OCI-LY7 (cell line): ENCODE measurements at regions of chr5 and their contacts with region 1.

Region 1: GRCh38 chr5:141691867-141692532 is 10.0 kb upstream of the ARAP3 start:
- DNase-seq: peak; percentile 81
- H3K4me3 ChIP-seq: peak overlapping the region; percentile 52
- H3K27ac ChIP-seq: no peak overlapping the region
- H3K4me1 ChIP-seq: peaks cover 16% of the 10 kb centered on the region
- CTCF ChIP-seq: peak; percentile 91

Region 2: GRCh38 chr5:141590127-141590526 is 101.9 kb before region 1 on chr5:
- CTCF ChIA-PET with region 1: no interaction called
- POLR2A ChIA-PET with region 1: no interaction called
- intact Hi-C with region 1: loop called (anchors 5 kb)
- DNase-seq: no peak
- H3K4me3 ChIP-seq: no peak overlapping the region
- H3K27ac ChIP-seq: no peak overlapping the region
- H3K4me1 ChIP-seq: peaks cover 22% of the 10 kb centered on the region
- CTCF ChIP-seq: no peak

Region 3: DNA sequence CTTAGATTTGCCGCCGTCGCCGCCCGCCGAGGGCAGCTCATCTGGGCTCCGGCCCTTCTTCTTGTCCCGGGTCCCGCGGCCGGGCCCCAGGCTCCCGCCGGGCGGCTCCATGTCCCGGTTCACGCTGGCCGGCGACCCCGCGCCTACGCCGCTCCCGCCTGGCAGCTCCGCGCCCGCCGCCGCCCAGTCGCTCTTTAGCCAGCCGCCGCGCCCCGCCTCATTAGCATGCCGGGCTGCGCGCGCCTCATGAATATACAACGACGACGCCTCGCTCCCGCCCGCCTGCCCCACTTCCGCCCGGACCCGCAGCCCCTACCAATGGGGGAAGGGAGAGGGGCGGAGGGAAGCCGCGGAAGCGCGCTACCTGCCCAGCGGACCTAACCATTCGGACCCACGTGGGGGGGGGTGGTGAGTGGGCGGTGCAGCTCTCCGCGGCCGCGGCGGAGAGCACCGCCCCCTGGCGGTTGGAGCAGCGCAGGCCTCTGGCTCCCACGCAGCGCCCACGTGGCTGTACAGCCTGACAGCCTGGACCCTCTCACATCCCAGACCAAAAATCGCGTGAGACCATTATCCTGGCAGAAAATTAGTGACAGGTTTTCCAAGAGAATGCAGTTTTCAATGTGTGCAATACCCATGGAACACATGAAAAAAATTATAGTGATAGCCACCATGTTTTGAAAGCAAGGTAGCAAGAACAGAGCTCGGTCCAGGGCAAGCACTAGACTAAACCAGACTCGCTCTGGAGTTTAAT is 73.0 kb before region 1 on chr5 and contains the start of gene DIAPH1:
- CTCF ChIA-PET with region 1: no interaction called
- POLR2A ChIA-PET with region 1: no interaction called
- intact Hi-C with region 1: no loop called
- DNase-seq: peak; percentile 98
- H3K4me3 ChIP-seq: peak within 1 kb of the TSS; percentile 98
- H3K27ac ChIP-seq: peak within 1 kb of the TSS; percentile 63
- H3K4me1 ChIP-seq: peaks cover 54% of the 10 kb centered on the region
- CTCF ChIP-seq: peak; percentile 97
- total RNA-seq, gene DIAPH1: 64.9 and 78.8 TPM in 2 replicates

Region 4: DNA sequence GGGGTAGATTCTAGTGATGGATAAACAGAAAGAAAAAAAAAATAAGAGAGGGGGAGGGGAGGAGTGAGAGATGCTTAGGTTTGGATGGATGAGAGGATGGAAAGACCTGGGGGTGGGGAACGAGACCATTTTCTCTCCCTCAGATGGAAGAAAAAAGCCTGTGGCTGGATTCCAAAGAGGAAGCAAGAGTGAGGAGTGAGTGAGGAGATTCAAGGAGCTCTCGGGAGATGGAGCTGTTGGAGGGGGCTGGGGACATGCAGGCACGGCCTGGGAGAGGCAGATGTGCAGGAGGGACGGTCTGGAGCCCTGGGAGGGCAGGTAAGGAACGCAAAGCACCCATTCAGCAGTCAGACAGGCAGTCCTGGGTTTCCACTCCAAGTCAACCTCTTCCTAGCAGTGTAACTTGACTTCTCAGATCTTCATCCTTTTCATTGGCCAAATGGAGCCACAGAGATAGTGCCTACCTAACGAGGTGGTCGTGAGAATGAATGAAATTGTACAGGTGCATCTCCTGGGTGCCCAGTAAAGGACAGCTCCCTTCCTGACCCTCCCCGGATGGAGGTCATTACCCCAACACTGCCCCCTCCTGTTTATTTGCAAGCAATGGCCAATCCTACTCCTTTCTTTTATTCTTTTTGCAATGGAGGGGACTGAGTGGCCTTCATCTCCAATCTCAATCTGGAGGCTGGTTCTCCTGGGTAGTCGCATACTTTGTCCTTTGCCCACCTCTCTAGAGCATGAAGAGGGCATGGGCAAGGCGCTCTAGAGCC is 134.0 kb after region 1 on chr5:
- CTCF ChIA-PET with region 1: interaction called, 4 read pairs
- POLR2A ChIA-PET with region 1: no interaction called
- intact Hi-C with region 1: loop called (anchors 5 kb)
- DNase-seq: no peak
- H3K4me3 ChIP-seq: no peak overlapping the region
- H3K27ac ChIP-seq: no peak overlapping the region
- H3K4me1 ChIP-seq: no peaks in the 10 kb centered on the region
- CTCF ChIP-seq: peak; percentile 68

Region 5: GRCh38 chr5:141960449-141961202 is 268.6 kb after region 1 on chr5:
- CTCF ChIA-PET with region 1: interaction called, 16 read pairs
- POLR2A ChIA-PET with region 1: interaction called, 7 read pairs
- intact Hi-C with region 1: loop called (anchors 1 kb)
- DNase-seq: peak; percentile 94
- H3K4me3 ChIP-seq: peak overlapping the region; percentile 32
- H3K27ac ChIP-seq: peak overlapping the region; percentile 27
- H3K4me1 ChIP-seq: peaks cover 42% of the 10 kb centered on the region
- CTCF ChIP-seq: peak; percentile 92

Region 6: GRCh38 chr5:142012792-142013388 is 320.9 kb after region 1 on chr5 and contains the start of gene GNPDA1:
- CTCF ChIA-PET with region 1: no interaction called
- POLR2A ChIA-PET with region 1: no interaction called
- intact Hi-C with region 1: loop called (anchors 2 kb)
- DNase-seq: peak; percentile 84
- H3K4me3 ChIP-seq: peak within 1 kb of the TSS; percentile 87
- H3K27ac ChIP-seq: peak within 1 kb of the TSS; percentile 45
- H3K4me1 ChIP-seq: peaks cover 44% of the 10 kb centered on the region
- CTCF ChIP-seq: peak; percentile 28; the same call in 1 of the 2 replicates
- total RNA-seq, gene GNPDA1: 20.2 and 22.9 TPM in 2 replicates

Region 7: DNA sequence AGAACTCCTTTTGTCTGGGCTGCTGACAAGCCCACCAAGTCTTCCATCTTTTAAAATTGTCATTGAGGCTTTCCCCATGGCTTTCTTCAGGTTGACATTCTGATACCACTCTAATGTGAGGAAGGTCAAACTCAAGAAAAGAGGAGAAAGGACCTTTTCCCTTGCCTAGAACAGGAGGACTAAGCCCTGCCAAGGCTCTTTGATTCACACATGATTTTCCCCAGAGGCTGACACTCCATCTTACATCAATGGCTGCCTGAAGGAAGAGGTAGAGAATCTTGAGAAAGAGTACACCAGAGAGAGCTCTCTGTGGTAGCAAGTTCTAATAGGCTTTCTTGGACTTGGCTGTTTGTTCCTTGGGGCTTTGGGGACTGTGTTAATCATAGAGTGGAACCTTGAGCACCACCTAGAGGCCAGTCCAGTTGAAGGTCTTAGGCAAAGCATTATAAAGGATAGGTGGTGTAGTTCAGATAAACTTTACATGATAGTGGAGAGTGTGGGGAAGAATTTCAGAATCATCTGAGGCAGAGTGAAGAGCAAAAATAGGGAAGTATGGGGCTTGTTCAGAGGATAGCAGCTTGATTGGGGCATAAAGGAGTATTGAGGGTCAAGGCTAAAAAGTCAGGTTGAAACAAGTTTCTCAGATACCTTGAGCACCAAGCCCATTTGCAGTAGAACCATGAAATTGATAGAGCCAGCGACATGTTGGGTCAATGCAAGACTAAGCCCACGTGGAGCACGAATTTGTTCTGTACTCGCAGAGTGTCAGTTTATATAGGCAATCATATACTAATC is 453.3 kb after region 1 on chr5:
- CTCF ChIA-PET with region 1: no interaction called
- POLR2A ChIA-PET with region 1: no interaction called
- intact Hi-C with region 1: loop called (anchors 2 kb)
- DNase-seq: peak; percentile 73
- H3K4me3 ChIP-seq: no peak overlapping the region
- H3K27ac ChIP-seq: no peak overlapping the region
- H3K4me1 ChIP-seq: no peaks in the 10 kb centered on the region
- CTCF ChIP-seq: peak; percentile 92